ENCODE measurements at regions of chr10 and their contacts with region 1.

Region 1: GRCh38 chr10:5396556-5397300 is 7.9 kb downstream of the TUBAL3 start:
- DNase-seq: no peak
- CTCF ChIP-seq: no peak

Region 2: GRCh38 chr10:4849555-4850242 is 547.0 kb before region 1 on chr10:
- in situ Hi-C with region 1: loop called (anchors 25 kb)
- DNase-seq: peak; percentile 73
- CTCF ChIP-seq: peak; percentile 99

Region 3: DNA sequence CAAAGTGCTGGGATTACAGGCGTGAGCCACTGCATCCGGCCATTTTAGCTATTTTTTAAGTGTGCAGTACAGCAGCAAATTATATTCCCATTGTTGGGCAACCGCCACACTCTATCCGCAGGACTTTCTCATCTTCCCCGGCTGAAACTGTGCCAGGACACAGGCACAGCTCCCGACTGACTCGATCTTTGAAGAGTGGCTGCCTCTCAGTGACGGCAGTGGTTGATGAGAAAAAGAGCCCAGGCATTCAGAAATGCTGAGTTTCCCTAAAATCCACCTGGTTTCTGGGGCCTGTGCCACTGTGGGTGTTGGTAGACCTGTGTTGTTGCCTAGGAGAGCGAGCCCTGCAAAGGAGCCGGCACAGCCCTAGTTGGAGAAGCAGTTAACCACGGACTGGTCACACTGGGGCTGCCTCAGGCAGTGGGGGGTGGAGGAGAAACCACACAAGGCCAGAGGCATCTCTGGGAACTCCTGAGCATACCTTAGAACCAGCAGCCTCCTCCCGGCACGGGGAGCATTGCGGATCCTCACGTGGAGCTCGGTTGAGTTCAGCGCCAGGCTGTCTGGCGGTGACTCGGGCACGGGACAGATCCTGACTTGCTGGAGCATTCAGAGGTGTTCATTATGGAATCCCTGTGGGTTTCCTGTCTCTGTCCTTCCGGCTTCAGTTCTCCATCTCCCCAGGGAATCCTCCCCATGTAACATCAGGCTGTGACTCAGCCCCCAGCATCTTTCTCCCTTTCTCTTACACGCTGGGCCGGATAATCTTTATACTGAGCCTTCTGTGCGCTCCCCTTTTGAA is 822.2 kb after region 1 on chr10:
- in situ Hi-C with region 1: no loop called
- DNase-seq: no peak
- CTCF ChIP-seq: no peak